ENCODE measurements at regions of chr11 and their contacts with region 1.

Region 1: GRCh38 chr11:11389238-11389637 is 36.2 kb upstream of the CSNK2A3 start:
- DNase-seq: no peak
- ATAC-seq: no peak
- H3K4me3 ChIP-seq: no peak overlapping the region
- H3K27ac ChIP-seq: no peak overlapping the region
- H3K4me1 ChIP-seq: no peaks in the 10 kb centered on the region
- H3K27me3 ChIP-seq: no peaks in the 10 kb centered on the region
- CTCF ChIP-seq: no peak
- EP300 ChIP-seq: no peak
- POLR2A ChIP-seq: no peak
- RAD21 ChIP-seq: no peak

Region 2: GRCh38 chr11:10885703-10886363 is 503.4 kb before region 1 on chr11:
- CTCF ChIA-PET with region 1: no interaction called
- POLR2A ChIA-PET with region 1: no interaction called
- RAD21 ChIA-PET with region 1: no interaction called
- SMC1A ChIA-PET with region 1: no interaction called
- in situ Hi-C with region 1: no loop called
- intact Hi-C with region 1: no loop called
- DNase-seq: no peak
- ATAC-seq: no peak
- H3K4me3 ChIP-seq: no peak overlapping the region
- H3K27ac ChIP-seq: no peak overlapping the region
- H3K4me1 ChIP-seq: no peaks in the 10 kb centered on the region
- H3K27me3 ChIP-seq: no peaks in the 10 kb centered on the region
- CTCF ChIP-seq: no peak
- EP300 ChIP-seq: no peak
- POLR2A ChIP-seq: no peak
- RAD21 ChIP-seq: no peak

Region 3: GRCh38 chr11:11374358-11375148 is 14.7 kb before region 1 on chr11:
- CTCF ChIA-PET with region 1: no interaction called
- POLR2A ChIA-PET with region 1: no interaction called
- RAD21 ChIA-PET with region 1: no interaction called
- SMC1A ChIA-PET with region 1: no interaction called
- in situ Hi-C with region 1: no loop called
- intact Hi-C with region 1: no loop called
- DNase-seq: peak; percentile 11
- ATAC-seq: peak; percentile 56; the same call in 2 of the 3 replicates
- H3K4me3 ChIP-seq: no peak overlapping the region
- H3K27ac ChIP-seq: no peak overlapping the region
- H3K4me1 ChIP-seq: no peaks in the 10 kb centered on the region
- H3K27me3 ChIP-seq: no peaks in the 10 kb centered on the region
- CTCF ChIP-seq: no peak
- EP300 ChIP-seq: no peak
- POLR2A ChIP-seq: no peak
- RAD21 ChIP-seq: no peak

Region 4: DNA sequence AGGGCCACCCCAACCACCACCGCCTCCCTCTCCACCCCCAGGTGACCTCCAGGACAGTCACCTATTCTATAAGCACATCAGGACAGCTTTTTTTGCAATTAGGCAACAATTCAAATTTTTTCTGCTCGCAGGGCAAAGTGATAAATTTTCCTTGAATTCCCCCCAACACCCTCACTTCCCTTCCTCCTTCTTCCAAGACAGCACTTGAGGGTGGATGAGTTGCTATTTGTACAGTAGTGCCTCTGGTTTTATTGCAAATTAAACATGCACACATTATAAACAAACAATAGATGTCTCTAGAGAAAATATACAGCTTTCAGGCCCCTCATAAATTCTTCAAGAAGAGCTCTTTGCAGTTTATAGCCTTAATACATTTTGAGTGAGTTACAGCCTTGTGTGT is 371.6 kb after region 1 on chr11:
- CTCF ChIA-PET with region 1: no interaction called
- POLR2A ChIA-PET with region 1: no interaction called
- RAD21 ChIA-PET with region 1: no interaction called
- SMC1A ChIA-PET with region 1: no interaction called
- in situ Hi-C with region 1: no loop called
- intact Hi-C with region 1: loop called (anchors 5 kb)
- DNase-seq: no peak
- ATAC-seq: no peak
- H3K4me3 ChIP-seq: no peak overlapping the region
- H3K27ac ChIP-seq: no peak overlapping the region
- H3K4me1 ChIP-seq: no peaks in the 10 kb centered on the region
- H3K27me3 ChIP-seq: peaks cover 2 to 4% of the 10 kb centered on the region in 2 experiments; a peak in 1 of 4 replicates
- CTCF ChIP-seq: no peak
- EP300 ChIP-seq: no peak
- POLR2A ChIP-seq: no peak
- RAD21 ChIP-seq: no peak